Mammary epithelial cell (primary cell): ENCODE measurements at regions of chr19 and their contacts with region 1.

Region 1: GRCh38 chr19:7934766-7935165 is 8.7 kb downstream of the TIMM44 start:
- DNase-seq: no peak
- H3K4me3 ChIP-seq: no peak overlapping the region
- H3K27ac ChIP-seq: no peak overlapping the region
- H3K4me1 ChIP-seq: peaks cover 13% of the 10 kb centered on the region
- H3K27me3 ChIP-seq: no peaks in the 10 kb centered on the region
- CTCF ChIP-seq: no peak

Region 2: DNA sequence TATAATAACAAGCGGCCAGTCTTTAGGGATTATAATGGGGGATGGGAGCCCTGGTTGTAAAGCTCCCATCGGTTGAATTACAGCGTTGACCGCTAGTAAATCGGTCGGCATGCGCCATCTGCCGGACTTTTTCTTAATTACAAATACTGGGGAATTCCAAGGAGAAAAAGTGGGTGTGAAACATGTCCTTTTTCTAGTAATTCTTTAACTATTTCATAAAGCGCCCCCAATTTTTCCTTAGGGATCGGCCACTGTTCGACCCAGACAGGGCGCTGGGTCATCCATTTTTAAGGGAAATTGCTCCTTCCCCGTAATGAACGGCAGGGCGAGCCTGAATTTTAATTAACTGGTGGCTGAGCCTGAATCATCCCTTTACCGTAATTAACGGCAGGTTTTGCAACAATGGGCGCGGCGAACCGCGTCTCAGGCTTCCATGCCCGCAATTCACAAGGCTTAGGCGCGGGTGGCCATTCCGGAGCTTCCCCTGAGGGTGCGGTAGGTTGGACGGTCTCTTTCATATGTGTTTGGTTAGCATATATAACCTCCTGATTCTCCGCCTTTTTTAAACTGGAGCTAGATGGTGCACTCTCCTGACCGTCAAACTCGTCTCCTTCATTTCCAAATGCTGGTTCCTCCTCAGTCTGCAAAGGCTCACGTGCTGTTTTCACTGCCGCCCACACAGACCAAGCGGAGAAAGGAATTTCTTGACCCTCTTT is 135.0 kb before region 1 on chr19:
- CTCF ChIA-PET with region 1: no interaction called
- dilution Hi-C with region 1: no loop called
- in situ Hi-C with region 1: no loop called
- intact Hi-C with region 1: no loop called
- DNase-seq: peak; percentile 56
- H3K4me3 ChIP-seq: peak overlapping the region; percentile 8 to 42 (median 22)
- H3K27ac ChIP-seq: no peak overlapping the region
- H3K4me1 ChIP-seq: peaks cover 5% of the 10 kb centered on the region
- H3K27me3 ChIP-seq: no peaks in the 10 kb centered on the region
- CTCF ChIP-seq: peak; percentile 32 to 55

Region 3: DNA sequence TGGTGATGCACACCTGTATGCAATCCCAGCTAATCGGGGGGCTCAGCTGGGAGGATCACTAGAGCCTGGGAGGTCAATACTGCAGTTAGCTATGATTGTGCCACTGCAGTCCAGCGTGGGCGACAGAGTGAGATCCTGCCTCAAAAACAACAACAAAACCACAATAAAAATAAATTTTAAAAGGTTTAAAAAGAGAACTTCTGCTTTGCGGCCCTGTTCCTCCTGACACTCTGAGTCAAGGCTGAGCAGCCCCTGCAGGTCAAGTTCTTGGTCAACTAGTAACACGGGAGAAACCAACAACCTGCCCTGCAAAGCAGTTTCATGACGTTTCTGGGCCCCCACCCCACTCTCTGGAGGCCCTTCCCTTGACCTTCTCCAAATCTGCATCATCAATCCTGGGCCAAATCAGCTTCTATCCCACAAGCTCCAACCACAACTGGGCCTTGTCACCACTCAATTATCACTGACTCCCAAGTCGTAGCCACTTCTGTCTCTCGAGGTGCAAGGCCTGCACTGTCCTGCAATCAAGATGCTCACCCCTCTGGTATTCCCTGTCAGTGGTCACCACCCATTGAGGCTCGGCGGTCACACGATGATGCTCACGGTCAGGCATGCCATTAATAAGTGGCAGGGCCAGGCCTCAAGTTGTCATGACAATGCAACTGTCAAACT is 63.2 kb after region 1 on chr19:
- CTCF ChIA-PET with region 1: no interaction called
- dilution Hi-C with region 1: loop called (anchors 5 kb)
- in situ Hi-C with region 1: no loop called
- intact Hi-C with region 1: no loop called
- DNase-seq: no peak
- H3K4me3 ChIP-seq: no peak overlapping the region
- H3K27ac ChIP-seq: no peak overlapping the region
- H3K4me1 ChIP-seq: peaks cover 29% of the 10 kb centered on the region
- H3K27me3 ChIP-seq: no peaks in the 10 kb centered on the region
- CTCF ChIP-seq: no peak